AG04450 (cell line): ENCODE measurements at regions of chr5 and their contacts with region 1.

Region 1: DNA sequence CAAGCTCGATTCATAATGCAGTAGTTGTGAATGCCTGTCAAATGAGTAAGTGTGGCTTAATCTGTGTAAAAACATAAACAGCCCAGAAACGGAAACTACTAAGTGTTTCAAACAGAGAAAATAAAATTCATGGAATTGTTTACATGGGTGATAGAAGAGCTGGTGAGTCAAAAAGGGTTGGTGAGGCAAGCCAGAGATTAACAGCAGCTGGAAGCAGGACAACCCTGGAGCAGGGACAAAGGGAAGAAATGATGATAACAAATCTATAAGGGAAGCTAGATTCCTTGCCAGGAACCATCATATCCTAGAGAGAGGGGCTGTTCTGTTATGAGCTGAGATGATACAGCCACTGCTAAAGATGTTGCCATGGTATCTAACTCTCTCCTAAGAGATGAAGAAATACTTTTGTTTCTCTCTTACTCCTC is 18.0 kb upstream of the PRR16 start:
- DNase-seq: peak; percentile 79
- H3K4me3 ChIP-seq: no peak overlapping the region
- H3K27ac ChIP-seq: peak overlapping the region; percentile 62
- H3K27me3 ChIP-seq: no peaks in the 10 kb centered on the region
- CTCF ChIP-seq: no peak

Region 2: DNA sequence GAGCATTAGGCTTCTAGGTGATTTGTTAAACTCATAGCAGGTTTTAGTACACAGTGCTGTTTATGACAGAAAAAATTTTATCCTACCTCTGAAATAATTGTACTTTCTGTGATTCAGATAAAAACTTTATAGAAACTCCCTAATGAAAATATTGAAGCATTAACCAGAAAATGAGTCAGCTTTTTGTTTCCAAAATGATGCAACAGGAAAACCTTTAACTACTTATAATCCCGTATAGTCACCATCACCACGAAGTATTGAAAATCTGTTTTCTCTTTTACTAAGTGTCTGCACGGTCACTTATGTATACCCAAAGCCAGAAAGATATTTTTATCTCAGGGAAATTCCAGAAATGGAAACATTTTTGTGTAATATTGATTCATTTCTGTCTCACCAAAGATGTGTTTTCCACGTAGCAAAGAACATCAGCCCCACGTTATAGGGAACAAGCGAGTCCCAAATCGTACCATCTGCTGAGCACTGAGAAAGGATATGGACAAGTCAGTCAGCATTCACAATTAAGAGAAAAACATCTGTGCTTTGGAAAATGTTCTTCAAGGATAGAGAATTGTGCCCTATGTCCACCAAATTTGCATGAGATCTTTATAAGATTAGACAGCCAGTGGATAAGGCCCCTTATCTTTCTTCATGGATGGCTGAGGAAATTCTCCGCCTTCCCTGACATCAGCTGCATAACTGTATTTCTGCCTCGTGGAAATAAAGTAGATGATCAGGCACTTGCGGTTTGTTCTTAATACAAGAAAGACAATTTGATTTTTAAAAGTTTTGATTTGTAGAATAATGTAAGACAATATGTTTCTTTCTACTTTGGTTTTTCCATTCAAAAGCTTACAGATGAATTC is 1048.3 kb before region 1 on chr5:
- CTCF ChIA-PET with region 1: no interaction called
- POLR2A ChIA-PET with region 1: no interaction called
- DNase-seq: no peak
- H3K4me3 ChIP-seq: no peak overlapping the region
- H3K27ac ChIP-seq: peak overlapping the region; percentile 82
- H3K27me3 ChIP-seq: no peaks in the 10 kb centered on the region
- CTCF ChIP-seq: no peak

Region 3: DNA sequence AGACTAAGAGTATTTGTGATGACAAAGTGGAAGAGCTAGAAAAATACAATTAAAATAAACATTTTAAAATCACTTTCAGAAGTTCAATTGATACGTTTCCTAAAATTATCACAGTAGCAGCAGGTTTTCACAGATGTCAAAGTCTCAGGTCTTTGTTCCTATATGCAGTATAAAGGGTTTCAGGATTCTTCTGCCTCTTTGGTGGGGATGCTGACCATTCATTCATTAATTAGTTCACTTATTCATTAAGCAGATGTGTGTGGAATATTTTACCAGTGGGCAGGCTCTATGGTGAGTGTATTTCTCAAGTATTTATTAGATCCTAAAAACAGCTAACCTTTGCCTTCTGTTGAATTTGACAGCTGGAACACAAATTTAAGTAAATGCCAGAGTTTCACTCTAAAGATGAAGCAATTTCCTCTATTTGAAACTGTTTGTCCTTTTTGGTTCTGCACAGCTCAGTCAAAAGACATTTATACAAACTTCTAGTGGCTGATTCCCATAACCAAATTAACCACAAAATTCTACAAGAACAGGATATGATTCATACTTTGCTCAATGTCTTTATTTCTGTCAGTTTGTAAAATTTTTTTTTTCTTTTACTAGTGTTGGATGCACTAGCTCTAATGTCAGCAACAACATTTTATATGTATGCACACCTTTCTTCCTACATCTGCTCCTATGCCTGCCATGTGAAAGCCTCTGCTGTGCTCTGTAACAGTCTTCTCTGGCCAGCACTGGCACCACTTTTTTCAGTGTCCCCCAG is 57.9 kb before region 1 on chr5:
- CTCF ChIA-PET with region 1: no interaction called
- POLR2A ChIA-PET with region 1: interaction called, 12 read pairs
- DNase-seq: peak; percentile 77
- H3K4me3 ChIP-seq: no peak overlapping the region
- H3K27ac ChIP-seq: peak overlapping the region; percentile 48
- H3K27me3 ChIP-seq: no peaks in the 10 kb centered on the region
- CTCF ChIP-seq: no peak